ENCODE measurements at regions of chr3 and their contacts with region 1.

Region 1: DNA sequence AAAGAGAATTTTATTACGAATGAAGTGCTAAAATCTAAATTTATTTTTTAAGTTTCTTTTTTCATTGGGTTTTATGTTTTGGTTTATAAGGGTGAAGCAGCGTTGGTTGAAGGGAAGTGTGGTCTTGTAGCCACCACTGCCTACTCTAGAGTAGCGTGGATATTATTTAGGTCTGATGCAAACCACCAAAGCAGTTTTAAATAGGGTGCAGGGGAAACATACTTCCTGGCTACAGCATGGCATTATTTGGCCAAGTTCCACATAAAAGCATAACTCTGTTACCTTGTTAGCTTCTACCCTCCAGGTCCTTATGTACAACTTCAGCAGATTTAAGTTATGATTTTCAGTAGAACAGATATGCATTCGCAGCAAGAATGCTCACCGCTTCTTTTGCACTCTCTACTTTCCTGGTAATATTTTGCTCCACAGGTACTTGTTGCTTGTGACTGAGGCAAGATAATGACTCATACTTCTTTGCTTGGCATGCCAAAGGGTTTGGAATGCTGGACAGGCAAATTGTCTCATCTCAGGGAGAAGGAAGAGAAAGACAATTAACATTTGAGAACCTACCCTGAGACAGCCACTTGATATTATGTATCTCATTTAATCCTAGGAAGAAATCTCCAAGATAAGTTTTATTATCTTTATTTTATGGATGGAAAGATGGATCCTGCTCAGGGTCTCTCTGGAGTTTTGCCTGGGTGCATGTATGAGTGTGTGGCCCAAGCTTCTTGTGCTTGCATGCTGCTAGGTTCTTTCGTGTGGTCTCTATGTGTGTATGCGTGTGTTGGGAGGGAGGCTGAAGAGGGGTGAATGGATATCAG is 5.4 kb downstream of the TGFBR2 start:
- DNase-seq: no peak
- ATAC-seq: 0 out of 2 replicates have a peak, but pooled peaks have one; percentile 39
- H3K4me3 ChIP-seq: no peak overlapping the region
- H3K27ac ChIP-seq: peak overlapping the region; percentile 68
- H3K4me1 ChIP-seq: peaks cover 54% of the 10 kb centered on the region
- H3K27me3 ChIP-seq: no peaks in the 10 kb centered on the region
- CTCF ChIP-seq: no peak

Region 2: DNA sequence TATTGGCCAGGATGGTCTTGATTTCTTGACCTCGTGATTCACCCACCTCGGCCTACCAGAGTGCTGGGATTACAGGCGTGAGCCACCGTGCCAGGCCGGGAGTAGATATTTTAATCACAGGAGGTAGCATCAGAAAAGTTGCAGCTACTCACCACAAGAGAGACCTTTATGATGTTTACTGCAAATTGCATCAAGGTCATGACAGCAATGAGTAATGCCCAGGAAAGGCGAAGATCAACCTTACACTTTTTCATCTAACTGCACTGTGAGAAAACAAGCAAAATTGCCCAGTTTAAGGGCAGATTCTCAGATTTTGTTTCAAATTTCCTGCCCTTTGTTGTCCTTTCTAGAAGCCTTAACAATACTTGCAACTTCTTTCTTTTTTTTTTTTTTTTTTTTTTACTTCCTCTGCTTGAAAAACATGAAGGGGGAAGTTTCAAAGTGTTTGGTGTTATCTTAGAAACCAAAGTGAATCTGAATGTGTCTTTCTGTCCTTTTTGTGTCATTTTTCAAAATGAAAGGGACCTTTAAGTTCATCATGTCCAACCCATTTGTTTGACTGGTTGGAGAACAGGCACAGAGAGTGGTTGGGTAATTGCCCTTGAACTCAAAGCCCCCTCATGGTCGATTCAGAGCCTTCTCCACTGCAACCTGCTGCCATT is 19.5 kb after region 1 on chr3:
- CTCF ChIA-PET with region 1: interaction called, 11 read pairs
- POLR2A ChIA-PET with region 1: interaction called, 7 read pairs
- in situ Hi-C with region 1: no loop called
- intact Hi-C with region 1: no loop called
- DNase-seq: no peak
- ATAC-seq: no peak; the same call in 1 of the 2 replicates
- H3K4me3 ChIP-seq: no peak overlapping the region
- H3K27ac ChIP-seq: no peak overlapping the region
- H3K4me1 ChIP-seq: peaks cover 19% of the 10 kb centered on the region
- H3K27me3 ChIP-seq: no peaks in the 10 kb centered on the region
- CTCF ChIP-seq: no peak